HEK293 (cell line): ENCODE measurements at regions of chr19 and their contacts with region 1.

Region 1: GRCh38 chr19:55599468-55600279 is at the start of gene FIZ1:
- H3K4me3 ChIP-seq: peak within 1 kb of the TSS; percentile 97
- H3K27ac ChIP-seq: peak within 1 kb of the TSS; percentile 97
- H3K4me1 ChIP-seq: peaks cover 3% of the 10 kb centered on the region; the same call in 1 of the 2 replicates
- CTCF ChIP-seq: no peak; the same call in 1 of the 2 replicates

Region 2: DNA sequence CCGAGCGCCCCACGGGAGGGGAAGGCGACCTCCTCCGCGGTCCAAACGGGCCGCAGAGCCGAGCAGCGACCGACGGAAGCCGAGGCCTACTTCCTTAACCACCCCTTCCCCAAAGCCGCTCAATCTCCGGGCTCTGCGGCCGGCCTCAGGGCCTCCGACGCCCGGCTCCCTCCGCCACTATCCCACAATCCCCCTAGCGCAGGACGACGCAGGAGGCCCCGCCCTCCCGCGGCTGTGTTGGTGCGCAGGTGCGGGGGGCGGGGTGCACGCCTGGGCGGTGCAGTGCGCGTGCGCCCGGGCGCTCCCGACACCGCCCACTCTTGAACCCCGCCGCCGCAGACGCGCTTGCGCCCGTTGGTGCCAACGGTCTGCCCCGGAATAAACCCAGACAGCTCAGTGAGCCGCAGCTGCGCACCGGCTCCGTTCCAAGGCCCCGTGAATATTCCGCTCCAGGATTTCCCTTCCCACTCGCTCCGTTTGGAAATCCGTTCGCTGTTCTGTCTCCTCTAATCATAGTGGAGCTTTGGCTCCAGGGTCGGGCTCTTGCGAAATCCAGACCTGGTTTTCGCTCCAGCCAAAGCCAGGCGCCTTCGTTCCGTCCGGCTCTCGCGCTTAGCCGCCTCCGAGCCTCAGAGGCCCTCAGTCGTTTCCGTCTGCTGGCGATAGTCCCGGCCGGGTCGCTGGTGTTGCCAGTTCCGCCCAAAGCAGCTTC is 340.7 kb before region 1 on chr19 and contains the start of gene PPP6R1:
- CTCF ChIA-PET with region 1: no interaction called
- POLR2A ChIA-PET with region 1: interaction called, 10 read pairs
- H3K4me3 ChIP-seq: peak within 1 kb of the TSS; percentile 96
- H3K27ac ChIP-seq: peak within 1 kb of the TSS; percentile 94
- H3K4me1 ChIP-seq: peaks cover 28% of the 10 kb centered on the region
- CTCF ChIP-seq: no peak

Region 3: GRCh38 chr19:55526216-55527196 is 73.2 kb before region 1 on chr19:
- CTCF ChIA-PET with region 1: no interaction called
- POLR2A ChIA-PET with region 1: interaction called, 10 read pairs
- H3K4me3 ChIP-seq: no peak overlapping the region
- H3K27ac ChIP-seq: no peak overlapping the region
- H3K4me1 ChIP-seq: no peaks in the 10 kb centered on the region
- CTCF ChIP-seq: no peak

Region 4: GRCh38 chr19:55586976-55587668 is 12.6 kb before region 1 on chr19:
- CTCF ChIA-PET with region 1: interaction called, 6 read pairs
- POLR2A ChIA-PET with region 1: interaction called, 71 read pairs
- H3K4me3 ChIP-seq: peak overlapping the region; percentile 48
- H3K27ac ChIP-seq: no peak overlapping the region
- H3K4me1 ChIP-seq: peaks cover 11% of the 10 kb centered on the region
- CTCF ChIP-seq: no peak

Region 5: GRCh38 chr19:55643348-55644176 is 43.9 kb after region 1 on chr19 and contains the start of gene ZNF581:
- CTCF ChIA-PET with region 1: no interaction called
- POLR2A ChIA-PET with region 1: interaction called, 10 read pairs
- H3K4me3 ChIP-seq: peak within 1 kb of the TSS; percentile 61
- H3K27ac ChIP-seq: peak within 1 kb of the TSS; percentile 83
- H3K4me1 ChIP-seq: peaks cover 27% of the 10 kb centered on the region
- CTCF ChIP-seq: no peak